Mammary epithelial cell (primary cell): ENCODE measurements at regions of chr5 and their contacts with region 1.

Region 1: DNA sequence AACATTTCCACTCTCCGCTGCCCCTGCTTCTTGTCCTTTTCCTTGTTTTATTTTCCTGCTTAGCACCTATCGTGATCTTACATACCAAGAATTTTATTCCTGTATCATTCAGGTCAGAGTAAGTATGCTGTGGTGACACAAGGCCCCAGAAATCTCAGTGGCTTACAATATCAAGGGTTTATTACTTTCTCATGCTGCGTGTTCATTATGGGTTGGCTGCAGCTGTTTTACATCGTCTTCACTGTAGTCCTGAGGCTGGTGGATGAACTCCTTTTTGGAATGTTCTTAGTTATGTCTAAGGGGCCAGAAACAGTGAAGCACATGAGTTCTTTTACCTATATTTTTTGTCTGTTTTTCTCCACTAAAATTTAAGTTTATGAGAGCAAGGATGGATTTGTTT is 51.2 kb downstream of the FCHO2 start:
- DNase-seq: no peak
- H3K4me3 ChIP-seq: no peak overlapping the region
- H3K27ac ChIP-seq: no peak overlapping the region
- H3K4me1 ChIP-seq: no peaks in the 10 kb centered on the region
- H3K27me3 ChIP-seq: no peaks in the 10 kb centered on the region
- CTCF ChIP-seq: no peak

Region 2: GRCh38 chr5:72908664-72909063 is 98.4 kb before region 1 on chr5:
- CTCF ChIA-PET with region 1: no interaction called
- dilution Hi-C with region 1: loop called (anchors 10 kb)
- in situ Hi-C with region 1: no loop called
- intact Hi-C with region 1: no loop called
- DNase-seq: no peak
- H3K4me3 ChIP-seq: no peak overlapping the region
- H3K27ac ChIP-seq: no peak overlapping the region
- H3K4me1 ChIP-seq: no peaks in the 10 kb centered on the region
- H3K27me3 ChIP-seq: no peaks in the 10 kb centered on the region
- CTCF ChIP-seq: no peak

Region 3: DNA sequence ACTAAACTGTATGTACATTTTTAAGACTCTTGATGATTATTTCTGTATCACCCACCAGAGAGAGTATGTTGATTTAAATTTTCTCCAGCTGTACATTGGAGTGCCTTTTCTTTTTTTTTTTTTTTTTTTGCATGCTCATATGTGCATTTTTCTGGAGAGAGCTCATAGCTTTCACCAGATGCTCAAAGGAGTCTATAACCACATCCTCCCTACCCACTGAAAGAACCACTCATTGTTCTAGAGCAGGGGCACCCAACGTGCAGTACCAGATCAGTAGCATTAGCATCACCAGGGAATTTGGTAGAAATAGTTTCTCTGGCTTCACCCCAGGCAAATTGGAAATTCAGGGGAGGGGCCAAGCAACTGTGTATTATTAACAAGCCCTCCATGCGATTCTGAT is 59.4 kb after region 1 on chr5:
- CTCF ChIA-PET with region 1: no interaction called
- dilution Hi-C with region 1: loop called (anchors 10 kb)
- in situ Hi-C with region 1: no loop called
- intact Hi-C with region 1: no loop called
- DNase-seq: peak; percentile 78
- H3K4me3 ChIP-seq: no peak overlapping the region
- H3K27ac ChIP-seq: no peak overlapping the region
- H3K4me1 ChIP-seq: peaks cover 3% of the 10 kb centered on the region
- H3K27me3 ChIP-seq: no peaks in the 10 kb centered on the region
- CTCF ChIP-seq: no peak

Region 4: GRCh38 chr5:73126381-73126780 is 119.3 kb after region 1 on chr5:
- CTCF ChIA-PET with region 1: interaction called, 15 read pairs
- dilution Hi-C with region 1: no loop called
- in situ Hi-C with region 1: no loop called
- intact Hi-C with region 1: no loop called
- DNase-seq: no peak
- H3K4me3 ChIP-seq: no peak overlapping the region
- H3K27ac ChIP-seq: no peak overlapping the region
- H3K4me1 ChIP-seq: peaks cover 21% of the 10 kb centered on the region
- H3K27me3 ChIP-seq: no peaks in the 10 kb centered on the region
- CTCF ChIP-seq: no peak

Region 5: GRCh38 chr5:73405691-73406090 is 398.6 kb after region 1 on chr5:
- CTCF ChIA-PET with region 1: no interaction called
- dilution Hi-C with region 1: no loop called
- in situ Hi-C with region 1: no loop called
- intact Hi-C with region 1: no loop called
- DNase-seq: no peak
- H3K4me3 ChIP-seq: no peak overlapping the region
- H3K27ac ChIP-seq: no peak overlapping the region
- H3K4me1 ChIP-seq: no peaks in the 10 kb centered on the region
- H3K27me3 ChIP-seq: no peaks in the 10 kb centered on the region
- CTCF ChIP-seq: no peak